CD14-positive monocyte (primary cell): ENCODE measurements at regions of chr2 and their contacts with region 1.

Region 1: GRCh38 chr2:98012561-98012991 is 16.8 kb upstream of the TMEM131 start:
- DNase-seq: peak; percentile 86 to 95 (median 95)
- H3K4me3 ChIP-seq: peak overlapping the region in 1 of 3 experiments; percentile 33
- H3K4me3 Mint-ChIP-seq: peak overlapping the region in 1 of 2 donors; percentile 21
- H3K27ac ChIP-seq: peak overlapping the region; percentile 81 to 86
- H3K27ac Mint-ChIP-seq: peak overlapping the region; percentile 85 to 96 (median 94)
- H3K4me1 ChIP-seq: peaks cover 60 to 71% of the 10 kb centered on the region in 2 donors
- H3K4me1 Mint-ChIP-seq: peaks cover 68% of the 10 kb centered on the region
- H3K27me3 ChIP-seq: no peaks in the 10 kb centered on the region
- H3K27me3 Mint-ChIP-seq: peaks cover 2 to 16% (median 6%) of the 10 kb centered on the region in 3 donors
- CTCF ChIP-seq: no peak

Region 2: GRCh38 chr2:98108110-98108509 is 95.5 kb after region 1 on chr2:
- intact Hi-C with region 1: no loop called
- DNase-seq: no peak
- H3K4me3 ChIP-seq: no peak overlapping the region
- H3K4me3 Mint-ChIP-seq: no peak overlapping the region
- H3K27ac ChIP-seq: no peak overlapping the region
- H3K27ac Mint-ChIP-seq: no peak overlapping the region
- H3K4me1 ChIP-seq: no peaks in the 10 kb centered on the region
- H3K4me1 Mint-ChIP-seq: no peaks in the 10 kb centered on the region
- H3K27me3 ChIP-seq: no peaks in the 10 kb centered on the region
- H3K27me3 Mint-ChIP-seq: peaks cover 3 to 11% (median 4%) of the 10 kb centered on the region in 3 donors
- CTCF ChIP-seq: no peak

Region 3: GRCh38 chr2:98134172-98135005 is 121.8 kb after region 1 on chr2:
- intact Hi-C with region 1: loop called in 1 of 2 experiments (anchors 5 kb)
- DNase-seq: peak; percentile 86 to 97 (median 88)
- H3K4me3 ChIP-seq: no peak overlapping the region
- H3K4me3 Mint-ChIP-seq: peak overlapping the region in 1 of 2 donors; percentile 32
- H3K27ac ChIP-seq: no peak overlapping the region
- H3K27ac Mint-ChIP-seq: peak overlapping the region; percentile 65 to 93 (median 80)
- H3K4me1 ChIP-seq: peaks cover 12 to 15% of the 10 kb centered on the region in 2 donors
- H3K4me1 Mint-ChIP-seq: peaks cover 19% of the 10 kb centered on the region
- H3K27me3 ChIP-seq: peaks cover 0 to 5% of the 10 kb centered on the region in 2 donors
- H3K27me3 Mint-ChIP-seq: peaks cover 2 to 18% (median 4%) of the 10 kb centered on the region in 3 donors
- CTCF ChIP-seq: no peak